ENCODE measurements at regions of chr3 and their contacts with region 1.

Region 1: GRCh38 chr3:179322286-179323196 is at the start of gene ZNF639:
- DNase-seq: peak in 41 of 42 donors; percentile 39 to 89 (median 79)

Region 2: GRCh38 chr3:179015551-179016020 is 307.0 kb before region 1 on chr3:
- intact Hi-C with region 1: loop called (anchors 2 kb)
- DNase-seq: peak in 25 of 42 donors; percentile 11 to 87 (median 65)

Region 3: GRCh38 chr3:179071550-179072397 is 250.8 kb before region 1 on chr3 and contains the start of gene ZMAT3:
- intact Hi-C with region 1: loop called (anchors 2 kb)
- DNase-seq: peak; percentile 79 to 96 (median 92)

Region 4: DNA sequence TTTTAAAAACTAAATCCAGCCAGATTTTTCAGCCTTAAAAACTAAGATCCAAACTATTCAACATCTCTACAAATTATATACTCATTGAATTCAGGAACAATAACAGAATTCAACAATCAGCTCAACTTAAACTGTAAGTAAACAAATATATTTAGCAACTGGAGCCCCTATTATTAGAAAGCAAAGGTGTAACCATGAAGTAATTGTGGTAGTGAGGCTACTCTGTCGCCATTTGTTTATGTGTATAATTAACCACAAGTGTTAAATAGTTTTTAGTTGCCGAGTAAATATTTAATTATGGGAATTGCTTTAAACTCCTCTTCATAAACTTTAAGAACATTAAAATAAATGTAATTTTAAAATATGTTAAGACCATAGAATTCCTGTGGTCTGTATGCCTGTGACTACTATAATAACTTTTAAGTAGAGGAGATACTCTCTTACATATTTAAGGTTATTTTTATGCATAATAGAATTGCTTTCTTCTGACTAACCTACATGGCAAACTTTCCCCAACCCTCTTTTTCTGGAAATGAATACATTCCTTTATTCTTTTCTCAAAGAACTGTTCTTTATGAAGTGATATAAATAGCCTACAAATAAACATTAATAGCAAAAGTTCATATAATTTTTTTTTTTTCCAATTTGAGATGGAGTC is 76.2 kb after region 1 on chr3:
- intact Hi-C with region 1: no loop called
- DNase-seq: no peak

Measured in head of caudate nucleus (tissue), 42 donors.